Posterior vena cava (tissue), 2 donors: ENCODE measurements at regions of chr4 and their contacts with region 1.

Region 1: GRCh38 chr4:150119492-150119891 is 41.2 kb downstream of the DCLK2 start:
- DNase-seq: no peak

Region 2: GRCh38 chr4:148420397-148420796 is 1699.1 kb before region 1 on chr4:
- intact Hi-C with region 1: loop called in 1 of 2 experiments (anchors 5 kb)
- DNase-seq: no peak

Region 3: GRCh38 chr4:149630079-149630478 is 489.4 kb before region 1 on chr4:
- intact Hi-C with region 1: no loop called
- DNase-seq: no peak

Region 4: DNA sequence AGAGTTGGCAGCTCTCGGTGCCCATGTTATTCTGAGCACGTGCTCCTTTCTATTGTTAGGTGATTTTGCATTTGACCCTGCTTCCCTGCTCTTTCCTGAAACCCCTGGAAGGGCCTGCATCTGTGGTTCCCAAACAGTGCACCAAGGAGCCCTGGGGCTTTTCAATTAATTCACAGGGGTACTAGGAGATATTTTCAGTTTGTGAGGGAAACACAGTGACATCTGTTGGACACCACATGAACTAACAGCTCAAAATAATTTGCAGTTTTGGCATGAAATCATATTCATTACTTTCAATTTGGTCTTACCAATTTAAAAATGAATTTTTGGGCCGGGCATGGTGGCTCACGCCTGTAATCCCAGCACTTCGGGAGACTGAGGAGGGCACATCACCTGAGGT is 1484.7 kb after region 1 on chr4:
- intact Hi-C with region 1: no loop called
- DNase-seq: no peak